Heart left ventricle (tissue), 16 donors: ENCODE measurements at regions of chr2 and their contacts with region 1.

Region 1: GRCh38 chr2:64644177-64645004 is 9.3 kb downstream of the SERTAD2 start:
- DNase-seq: peak; percentile 83 to 89 (median 86)
- ATAC-seq: peak; percentile 91 to 94 (median 92)
- H3K4me3 ChIP-seq: peak overlapping the region; percentile 11 to 62 (median 55)
- H3K27ac ChIP-seq: peak overlapping the region; percentile 63 to 96 (median 92)
- H3K4me1 ChIP-seq: peaks cover 10 to 82% (median 60%) of the 10 kb centered on the region in 12 donors
- H3K27me3 ChIP-seq: no peaks in the 10 kb centered on the region
- CTCF ChIP-seq: no peak
- POLR2A ChIP-seq: peak; percentile 6 to 90

Region 2: GRCh38 chr2:64504774-64505720 is 139.3 kb before region 1 on chr2:
- intact Hi-C with region 1: no loop called
- DNase-seq: no peak
- ATAC-seq: no peak
- H3K4me3 ChIP-seq: no peak overlapping the region
- H3K27ac ChIP-seq: no peak overlapping the region
- H3K4me1 ChIP-seq: no peaks in the 10 kb centered on the region
- H3K27me3 ChIP-seq: no peaks in the 10 kb centered on the region
- CTCF ChIP-seq: no peak
- POLR2A ChIP-seq: no peak

Region 3: DNA sequence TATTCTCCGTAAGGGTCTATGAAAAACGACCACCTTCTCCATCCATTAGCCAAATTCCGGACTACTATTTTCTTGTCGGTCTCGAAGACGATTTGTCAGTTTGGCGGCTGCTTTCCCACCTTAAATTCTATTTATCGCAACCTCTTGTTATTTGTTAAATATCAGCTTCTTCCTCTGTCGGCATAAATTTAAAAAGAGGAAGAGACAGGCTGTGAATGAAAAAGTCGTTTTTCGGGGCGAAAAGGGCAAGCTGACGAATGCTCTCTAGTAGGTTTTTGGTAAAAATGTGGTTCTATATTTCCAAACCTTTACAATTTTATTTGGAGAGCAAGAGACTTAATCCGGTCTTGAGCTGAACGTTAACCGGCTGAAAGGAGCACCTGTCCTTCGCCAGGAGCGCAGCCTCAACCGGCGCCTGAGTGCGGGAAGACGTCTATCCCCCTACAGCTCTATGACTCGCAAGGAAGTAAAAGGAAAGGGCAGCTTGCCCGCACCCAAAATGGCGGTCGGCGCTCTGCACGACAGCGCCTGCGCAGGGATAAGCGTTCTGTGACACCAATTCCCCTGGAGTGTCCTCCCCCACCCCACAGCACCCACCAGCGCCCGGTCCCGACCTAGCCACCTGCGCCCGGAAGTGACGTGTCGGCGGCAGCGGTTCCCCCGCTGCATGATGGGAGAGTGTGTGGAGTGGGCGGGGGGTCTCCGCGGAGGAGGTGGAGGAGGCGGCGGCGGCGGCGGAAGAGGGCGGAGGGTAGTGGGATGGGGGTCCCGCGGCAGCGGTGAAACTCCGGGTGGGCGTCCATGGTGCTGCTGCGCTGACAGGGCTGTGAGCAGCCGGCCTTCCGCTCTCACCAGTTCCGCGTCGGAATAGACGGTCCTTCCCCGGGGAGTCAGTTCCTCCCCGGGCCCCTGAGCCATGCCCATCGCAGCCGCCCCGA is 120.5 kb before region 1 on chr2 and contains the start of gene AFTPH:
- intact Hi-C with region 1: loop called in 3 of 10 experiments (anchors 5 to 10 kb)
- DNase-seq: peak; percentile 99 to 100 (median 99)
- ATAC-seq: peak; percentile 99 to 100 (median 99)
- H3K4me3 ChIP-seq: peak within 1 kb of the TSS; percentile 70 to 97 (median 94)
- H3K27ac ChIP-seq: peak within 1 kb of the TSS; percentile 85 to 98 (median 94)
- H3K4me1 ChIP-seq: peaks cover 0 to 42% (median 28%) of the 10 kb centered on the region in 12 donors
- H3K27me3 ChIP-seq: no peaks in the 10 kb centered on the region
- CTCF ChIP-seq: no peak
- POLR2A ChIP-seq: peak in 1 of 2 donors; percentile 77
- total RNA-seq, gene AFTPH: 9.2 to 15.2 (median 11.4) TPM

Region 4: GRCh38 chr2:64595397-64596160 is 48.8 kb before region 1 on chr2:
- intact Hi-C with region 1: loop called in 3 of 10 experiments (anchors 5 to 10 kb)
- DNase-seq: no peak
- ATAC-seq: peak in 1 of 4 donors; percentile 44
- H3K4me3 ChIP-seq: no peak overlapping the region
- H3K27ac ChIP-seq: no peak overlapping the region
- H3K4me1 ChIP-seq: peaks cover 0 to 25% (median 5%) of the 10 kb centered on the region in 12 donors
- H3K27me3 ChIP-seq: no peaks in the 10 kb centered on the region
- CTCF ChIP-seq: peak in 7 of 12 donors; percentile 8 to 45 (median 33)
- POLR2A ChIP-seq: no peak

Region 5: DNA sequence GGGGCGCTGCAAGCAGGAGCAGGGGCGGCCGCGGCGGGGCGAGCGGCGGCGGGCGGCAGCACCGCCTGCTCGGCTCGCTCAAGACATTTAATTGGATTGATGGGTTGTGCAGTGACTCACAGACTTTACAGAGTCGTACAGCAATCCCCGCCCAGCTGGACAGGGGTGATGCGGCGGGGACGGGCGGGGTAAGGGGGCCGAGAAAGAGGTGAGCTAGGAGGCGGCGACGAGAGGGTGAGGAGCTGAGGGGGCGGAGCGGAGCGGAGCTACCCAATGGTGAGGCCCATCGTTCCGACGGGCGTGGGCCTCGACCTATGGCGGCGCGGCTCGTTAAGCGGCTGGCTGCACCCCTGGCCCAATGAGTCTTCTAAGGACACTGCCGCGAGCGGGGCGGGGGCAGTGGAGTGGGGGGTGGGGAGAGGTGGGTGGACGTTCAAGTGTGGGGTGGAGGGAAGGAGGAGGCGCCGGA is 106.5 kb after region 1 on chr2:
- intact Hi-C with region 1: loop called in 2 of 10 experiments (anchors 2 kb)
- DNase-seq: peak; percentile 99 to 100 (median 100)
- ATAC-seq: peak; percentile 92 to 95 (median 94)
- H3K4me3 ChIP-seq: peak overlapping the region; percentile 50 to 88 (median 78)
- H3K27ac ChIP-seq: peak overlapping the region; percentile 74 to 99 (median 97)
- H3K4me1 ChIP-seq: peaks cover 0 to 30% (median 16%) of the 10 kb centered on the region in 12 donors
- H3K27me3 ChIP-seq: no peaks in the 10 kb centered on the region
- CTCF ChIP-seq: peak in 4 of 12 donors; percentile 15 to 46 (median 23)
- POLR2A ChIP-seq: peak; percentile 85 to 99

Region 6: GRCh38 chr2:64831134-64831976 is 187.0 kb after region 1 on chr2:
- intact Hi-C with region 1: loop called in 7 of 10 experiments (anchors 1 to 10 kb)
- DNase-seq: peak; percentile 77 to 93 (median 88)
- ATAC-seq: peak; percentile 79 to 98 (median 97)
- H3K4me3 ChIP-seq: peak overlapping the region in 3 of 12 donors; percentile 2 to 37 (median 9)
- H3K27ac ChIP-seq: peak overlapping the region in 11 of 12 donors; percentile 31 to 90 (median 72)
- H3K4me1 ChIP-seq: peaks cover 0 to 18% (median 10%) of the 10 kb centered on the region in 12 donors
- H3K27me3 ChIP-seq: no peaks in the 10 kb centered on the region
- CTCF ChIP-seq: peak; percentile 83 to 95 (median 88)
- POLR2A ChIP-seq: no peak

Region 7: GRCh38 chr2:65366595-65367125 is 722.3 kb after region 1 on chr2:
- intact Hi-C with region 1: no loop called
- DNase-seq: peak in 1 of 5 donors; percentile 25
- ATAC-seq: peak in 3 of 4 donors; percentile 65 to 80 (median 76)
- H3K4me3 ChIP-seq: peak overlapping the region in 3 of 12 donors; percentile 15 to 23 (median 19)
- H3K27ac ChIP-seq: peak overlapping the region in 10 of 12 donors; percentile 0 to 73 (median 38)
- H3K4me1 ChIP-seq: peaks cover 3 to 76% (median 50%) of the 10 kb centered on the region in 12 donors
- H3K27me3 ChIP-seq: no peaks in the 10 kb centered on the region
- CTCF ChIP-seq: no peak
- POLR2A ChIP-seq: no peak